PC-9 (cell line): ENCODE measurements at regions of chr2 and their contacts with region 1.

Region 1: DNA sequence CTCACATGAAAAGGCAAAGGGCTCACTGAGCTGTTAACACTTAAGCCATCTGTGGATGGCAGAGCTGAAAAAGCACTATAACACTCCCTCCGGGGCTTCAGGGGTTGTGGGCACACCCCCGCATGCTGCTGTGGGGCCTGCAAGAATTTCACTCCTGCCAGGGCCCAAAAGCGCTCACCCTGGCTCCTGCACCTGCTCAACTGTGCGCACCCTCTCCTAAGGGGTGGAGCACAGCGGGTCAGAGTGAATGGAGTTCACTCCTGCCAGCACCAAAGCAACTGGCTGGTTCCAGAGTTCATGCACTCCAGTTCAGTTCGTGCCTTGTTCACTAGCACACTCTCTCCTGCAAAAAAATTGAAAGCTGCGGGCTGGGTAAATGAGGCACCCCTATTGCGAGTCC is 814.2 kb upstream of the SLC39A10 start:
- DNase-seq: no peak
- H3K4me3 ChIP-seq: no peak overlapping the region
- H3K27ac ChIP-seq: no peak overlapping the region
- H3K4me1 ChIP-seq: no peaks in the 10 kb centered on the region
- H3K27me3 ChIP-seq: no peaks in the 10 kb centered on the region
- CTCF ChIP-seq: no peak

Region 2: GRCh38 chr2:195049372-195050031 is 206.6 kb after region 1 on chr2:
- CTCF ChIA-PET with region 1: no interaction called
- POLR2A ChIA-PET with region 1: no interaction called
- intact Hi-C with region 1: no loop called
- DNase-seq: no peak
- H3K4me3 ChIP-seq: no peak overlapping the region
- H3K27ac ChIP-seq: no peak overlapping the region
- H3K4me1 ChIP-seq: no peaks in the 10 kb centered on the region
- H3K27me3 ChIP-seq: no peaks in the 10 kb centered on the region
- CTCF ChIP-seq: no peak

Region 3: GRCh38 chr2:195151711-195152110 is 308.8 kb after region 1 on chr2:
- CTCF ChIA-PET with region 1: no interaction called
- POLR2A ChIA-PET with region 1: no interaction called
- intact Hi-C with region 1: loop called (anchors 5 kb)
- DNase-seq: no peak
- H3K4me3 ChIP-seq: no peak overlapping the region
- H3K27ac ChIP-seq: no peak overlapping the region
- H3K4me1 ChIP-seq: no peaks in the 10 kb centered on the region
- H3K27me3 ChIP-seq: no peaks in the 10 kb centered on the region
- CTCF ChIP-seq: no peak